Activated CD8-positive, alpha-beta memory T cell treated with anti-CD3 and anti-CD28 coated beads, Interleukin-2, amount 10 ng/mL, durations not matched to agents 7 days and 5 days (primary cell): ENCODE measurements at regions of chr7 and their contacts with region 1.

Region 1: DNA sequence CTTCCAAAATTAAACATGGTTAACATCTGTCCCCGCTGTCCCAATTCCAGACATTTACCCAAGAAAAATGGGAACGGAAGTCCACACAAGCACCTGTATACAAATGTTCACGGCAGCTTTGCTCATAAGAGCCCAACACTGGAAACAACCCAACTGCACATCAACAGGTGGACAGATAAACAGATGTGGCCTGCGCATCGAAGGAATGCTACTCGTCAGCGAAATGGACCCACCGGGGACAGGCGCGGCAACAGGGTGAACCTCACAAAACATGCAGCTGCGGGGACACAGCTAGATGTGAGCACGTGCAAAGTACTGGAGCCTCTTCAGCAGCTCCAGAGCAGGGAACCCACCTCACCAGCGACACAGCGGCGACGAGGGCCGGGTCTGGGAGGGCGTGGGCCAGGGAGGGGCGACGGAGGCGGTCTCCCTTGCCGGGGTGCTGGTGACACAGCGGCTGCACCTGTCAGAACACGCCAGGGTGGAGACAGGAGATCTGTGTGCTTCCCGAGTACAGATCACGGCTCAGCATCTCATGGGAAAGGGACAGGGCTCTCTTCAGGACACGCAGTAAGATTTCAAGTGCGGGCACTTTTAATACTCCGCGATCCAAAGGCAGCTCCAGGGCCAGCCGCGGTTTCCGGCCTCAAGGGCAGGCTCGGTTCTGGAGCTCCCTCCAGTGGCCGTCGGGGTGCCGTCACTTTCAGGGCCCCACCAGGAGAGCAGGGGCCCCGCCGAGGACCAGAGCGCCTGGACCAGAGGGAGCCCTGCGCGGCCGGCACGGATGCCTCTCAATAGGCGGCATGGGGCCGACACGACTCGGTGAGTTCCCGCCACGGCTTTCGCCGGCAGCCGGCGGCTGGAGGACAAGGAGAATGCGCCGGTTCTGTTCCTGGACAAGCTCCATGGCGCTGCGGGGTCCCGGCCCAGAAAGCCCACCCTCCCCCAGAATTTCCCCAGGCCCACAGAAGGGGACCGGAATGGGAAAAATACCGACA is 21.2 kb downstream of the GPR146 start:
- DNase-seq: peak; percentile 87
- ATAC-seq: peak; percentile 98
- H3K4me3 Mint-ChIP-seq: no peak overlapping the region
- H3K27ac Mint-ChIP-seq: no peak overlapping the region
- H3K4me1 Mint-ChIP-seq: peaks cover 2% of the 10 kb centered on the region
- H3K27me3 Mint-ChIP-seq: no peaks in the 10 kb centered on the region

Region 2: GRCh38 chr7:974820-975681 is 90.5 kb before region 1 on chr7 and contains the start of gene COX19:
- CTCF ChIA-PET with region 1: interaction called, 13 read pairs
- DNase-seq: peak; percentile 92
- ATAC-seq: peak; percentile 94
- H3K4me3 Mint-ChIP-seq: peak within 1 kb of the TSS; percentile 79
- H3K27ac Mint-ChIP-seq: peak within 1 kb of the TSS; percentile 70
- H3K4me1 Mint-ChIP-seq: peaks cover 21% of the 10 kb centered on the region
- H3K27me3 Mint-ChIP-seq: no peaks in the 10 kb centered on the region
- total RNA-seq, gene COX19: 18.7 to 18.9 TPM

Region 3: DNA sequence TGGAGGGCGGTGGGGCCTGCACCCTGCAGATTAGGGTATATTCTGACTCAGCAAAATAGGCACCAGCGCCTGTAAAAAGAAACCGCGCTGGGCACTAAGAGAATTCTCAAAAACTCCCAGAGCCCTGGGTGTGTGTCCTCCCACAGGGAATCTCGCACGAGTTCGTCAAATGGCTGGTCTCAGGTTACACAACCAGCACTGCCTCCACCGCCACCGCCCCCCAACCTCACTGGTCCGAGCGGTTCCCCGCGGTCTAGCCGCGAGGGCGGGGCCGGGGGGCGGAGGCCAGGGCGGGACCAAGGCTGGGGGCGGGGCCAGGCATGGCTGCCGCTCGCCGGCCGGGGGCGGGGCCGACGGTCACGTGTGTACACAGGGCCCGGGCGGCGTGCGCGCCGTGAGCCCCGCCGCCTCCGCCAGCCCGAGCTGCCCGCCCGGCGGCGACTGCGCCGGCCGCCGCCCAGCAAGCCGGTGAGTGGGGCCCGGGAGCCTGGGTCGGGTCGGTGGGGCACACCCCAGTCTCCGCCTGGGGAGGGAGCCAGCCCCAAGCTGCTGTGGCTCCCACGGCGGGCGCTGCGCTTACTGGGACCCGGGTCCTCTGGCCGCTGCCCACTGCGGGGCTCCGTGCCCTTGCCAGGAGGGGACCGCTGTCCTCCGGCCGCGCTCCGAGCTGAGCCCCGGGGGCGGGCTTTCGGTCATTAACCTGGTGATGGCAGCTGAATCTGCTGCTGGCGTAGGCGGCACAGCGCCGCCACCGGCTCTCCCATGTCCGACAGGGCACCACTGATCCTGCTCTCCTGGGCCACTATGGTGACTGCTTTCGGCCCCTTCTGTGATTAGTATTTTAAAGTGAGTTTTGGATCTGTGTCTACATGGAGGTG is 21.1 kb before region 1 on chr7 and contains the start of gene GPR146:
- CTCF ChIA-PET with region 1: interaction called, 46 read pairs
- DNase-seq: peak; percentile 93
- ATAC-seq: peak; percentile 93
- H3K4me3 Mint-ChIP-seq: peak within 1 kb of the TSS; percentile 77
- H3K27ac Mint-ChIP-seq: peak within 1 kb of the TSS; percentile 82
- H3K4me1 Mint-ChIP-seq: peaks cover 67% of the 10 kb centered on the region
- H3K27me3 Mint-ChIP-seq: no peaks in the 10 kb centered on the region
- total RNA-seq, gene GPR146: 0.40 to 2.1 TPM

Region 4: GRCh38 chr7:1076181-1077072 is 10.9 kb after region 1 on chr7:
- CTCF ChIA-PET with region 1: interaction called, 11 read pairs
- DNase-seq: no peak
- ATAC-seq: no peak
- H3K4me3 Mint-ChIP-seq: no peak overlapping the region
- H3K27ac Mint-ChIP-seq: no peak overlapping the region
- H3K4me1 Mint-ChIP-seq: no peaks in the 10 kb centered on the region
- H3K27me3 Mint-ChIP-seq: no peaks in the 10 kb centered on the region

Region 5: DNA sequence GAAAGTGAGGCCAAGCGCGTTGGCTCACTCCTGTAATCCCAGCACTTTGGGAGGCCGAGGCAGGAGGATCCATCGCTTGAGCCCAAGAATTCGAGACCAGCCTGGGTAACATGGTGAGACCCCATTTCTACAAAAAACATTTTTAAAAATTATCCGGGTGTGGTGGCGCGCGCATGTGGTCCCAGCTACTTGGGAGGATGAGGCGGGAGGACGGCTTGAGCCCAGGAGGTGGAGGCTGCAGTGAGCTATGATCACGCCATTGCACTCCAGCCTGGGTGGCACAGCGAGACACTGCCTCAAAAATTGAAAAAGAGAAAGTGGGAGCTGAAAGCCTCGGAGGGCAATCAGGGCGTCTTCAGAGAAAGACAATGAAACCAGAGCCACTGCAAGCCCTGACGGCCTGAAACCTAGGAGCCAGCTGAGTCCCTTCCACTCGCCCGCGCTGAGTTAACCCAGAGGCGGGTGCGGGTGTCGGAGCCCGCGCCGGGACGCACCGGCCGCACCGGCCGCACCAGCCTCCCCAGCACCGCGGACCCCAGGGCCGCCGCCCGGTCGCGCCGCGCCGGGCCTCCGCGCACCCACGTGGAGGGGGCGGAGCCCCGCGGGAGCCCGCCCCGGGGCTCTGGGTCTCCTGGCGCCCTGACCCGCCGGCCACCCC is 72.1 kb after region 1 on chr7:
- CTCF ChIA-PET with region 1: interaction called, 14 read pairs
- DNase-seq: no peak
- ATAC-seq: peak; percentile 83
- H3K4me3 Mint-ChIP-seq: peak overlapping the region; percentile 79
- H3K27ac Mint-ChIP-seq: peak overlapping the region; percentile 81
- H3K4me1 Mint-ChIP-seq: peaks cover 16% of the 10 kb centered on the region
- H3K27me3 Mint-ChIP-seq: no peaks in the 10 kb centered on the region

Region 6: DNA sequence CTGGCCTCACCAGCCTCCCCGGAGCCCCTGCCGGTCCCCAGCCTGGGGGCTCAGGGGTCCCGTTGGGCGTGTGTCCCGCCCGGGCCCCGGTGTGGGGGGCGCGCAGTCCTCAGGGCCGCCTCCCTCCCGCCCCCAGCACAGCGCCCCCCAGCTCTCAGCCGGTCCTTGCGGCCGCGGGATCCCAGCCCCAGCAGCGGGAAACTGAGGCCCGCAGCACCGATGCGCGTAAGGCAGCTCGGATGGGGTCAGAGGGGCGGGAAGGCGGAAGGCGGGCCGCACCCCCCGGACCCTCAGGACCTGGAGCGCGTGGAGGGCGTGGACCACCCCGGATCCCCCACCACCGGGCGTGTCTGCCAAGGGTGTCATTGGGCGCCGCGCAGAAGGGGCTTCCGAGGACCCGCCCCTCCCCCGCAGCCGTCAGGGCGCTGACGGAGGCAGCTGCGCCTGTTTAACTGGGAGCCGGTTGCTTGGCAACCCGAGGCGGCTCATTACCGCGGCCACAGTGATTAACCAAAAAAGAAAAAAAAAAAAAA is 182.0 kb after region 1 on chr7:
- CTCF ChIA-PET with region 1: no interaction called
- DNase-seq: no peak
- ATAC-seq: no peak
- H3K4me3 Mint-ChIP-seq: no peak overlapping the region
- H3K27ac Mint-ChIP-seq: no peak overlapping the region
- H3K4me1 Mint-ChIP-seq: no peaks in the 10 kb centered on the region
- H3K27me3 Mint-ChIP-seq: peaks cover 64% of the 10 kb centered on the region